ENCODE measurements at regions of chr12 and their contacts with region 1.

Region 1: GRCh38 chr12:19572920-19573558 is 133.7 kb downstream of the AEBP2 start:
- DNase-seq: peak; percentile 13 to 52 (median 18)
- ATAC-seq: peak; percentile 84
- H3K4me3 ChIP-seq: no peak overlapping the region
- H3K27ac ChIP-seq: no peak overlapping the region
- H3K4me1 ChIP-seq: peaks cover 5 to 13% of the 10 kb centered on the region in 2 experiments; a peak in 4 of 5 replicates
- H3K27me3 ChIP-seq: no peaks in the 10 kb centered on the region
- CTCF ChIP-seq: peak; percentile 53 to 64 (median 55); a peak in 5 of 6 replicates
- EP300 ChIP-seq: no peak
- POLR2A ChIP-seq: no peak
- RAD21 ChIP-seq: peak in 1 of 2 experiments; percentile 49; a peak in 2 of 4 replicates

Region 2: GRCh38 chr12:19643635-19644034 is 70.6 kb after region 1 on chr12:
- CTCF ChIA-PET with region 1: no interaction called
- POLR2A ChIA-PET with region 1: no interaction called
- in situ Hi-C with region 1: no loop called
- intact Hi-C with region 1: loop called (anchors 1 kb)
- DNase-seq: peak in 2 of 4 experiments; percentile 3 to 5
- ATAC-seq: no peak
- H3K4me3 ChIP-seq: no peak overlapping the region
- H3K27ac ChIP-seq: no peak overlapping the region
- H3K4me1 ChIP-seq: no peaks in the 10 kb centered on the region; a peak in 2 of 5 replicates
- H3K27me3 ChIP-seq: no peaks in the 10 kb centered on the region
- CTCF ChIP-seq: peak; percentile 5 to 28 (median 27); a peak in 3 of 6 replicates
- EP300 ChIP-seq: no peak
- POLR2A ChIP-seq: no peak
- RAD21 ChIP-seq: peak; percentile 15 to 39; a peak in 2 of 4 replicates

Region 3: GRCh38 chr12:19700969-19701368 is 127.9 kb after region 1 on chr12:
- CTCF ChIA-PET with region 1: no interaction called
- POLR2A ChIA-PET with region 1: no interaction called
- in situ Hi-C with region 1: no loop called
- intact Hi-C with region 1: no loop called
- DNase-seq: no peak
- ATAC-seq: no peak
- H3K4me3 ChIP-seq: no peak overlapping the region
- H3K27ac ChIP-seq: no peak overlapping the region
- H3K4me1 ChIP-seq: no peaks in the 10 kb centered on the region
- H3K27me3 ChIP-seq: no peaks in the 10 kb centered on the region
- CTCF ChIP-seq: no peak
- EP300 ChIP-seq: no peak
- POLR2A ChIP-seq: no peak
- RAD21 ChIP-seq: no peak

Measured in K562 (cell line).